IMR-90 (cell line): ENCODE measurements at regions of chr17 and their contacts with region 1.

Region 1: GRCh38 chr17:63626551-63627180 is 4.4 kb downstream of the MAP3K3 start:
- DNase-seq: peak; percentile 34
- ATAC-seq: no peak
- H3K4me3 ChIP-seq: peak overlapping the region; percentile 21; the same call in 1 of the 2 replicates
- H3K27ac ChIP-seq: no peak overlapping the region
- H3K4me1 ChIP-seq: peaks cover 6% of the 10 kb centered on the region; the same call in 1 of the 2 replicates
- H3K27me3 ChIP-seq: no peaks in the 10 kb centered on the region
- CTCF ChIP-seq: no peak
- POLR2A ChIP-seq: no peak
- RAD21 ChIP-seq: no peak

Region 2: DNA sequence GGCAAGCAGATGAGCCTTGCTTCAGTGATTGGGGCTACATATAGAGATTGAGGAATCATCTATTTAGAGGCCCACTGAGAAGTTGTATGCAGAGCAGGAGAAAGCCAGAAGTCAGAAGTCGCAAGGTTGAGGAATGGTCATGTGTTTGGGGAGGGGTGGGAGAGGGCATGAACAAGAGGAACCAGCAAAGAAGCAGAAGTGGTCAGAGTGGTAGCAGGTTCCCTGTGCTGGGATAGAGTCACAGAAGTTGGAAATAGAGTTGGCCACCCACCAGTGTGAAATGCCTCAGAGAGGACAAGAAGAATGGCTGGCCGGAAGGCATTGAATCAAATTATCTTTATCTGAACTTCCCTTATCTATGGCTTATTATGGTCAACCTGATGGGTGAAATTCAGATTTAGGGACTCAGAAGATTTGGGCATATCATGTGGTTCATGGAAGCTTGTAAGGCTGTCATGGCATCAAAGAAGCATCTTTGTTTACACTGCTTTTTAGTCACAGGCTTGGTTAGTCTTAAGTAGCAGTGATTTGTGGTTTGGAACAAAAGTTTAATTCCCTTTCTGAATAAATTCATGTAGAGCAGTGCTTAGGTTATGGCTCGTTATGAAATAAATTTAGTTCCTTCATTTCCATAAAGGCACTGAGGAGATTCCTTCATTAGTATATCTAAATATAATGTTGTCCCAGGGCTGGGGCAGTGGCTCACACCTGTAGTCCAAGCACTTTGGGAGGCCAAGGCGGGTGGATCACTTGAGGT is 15.2 kb after region 1 on chr17:
- CTCF ChIA-PET with region 1: no interaction called
- POLR2A ChIA-PET with region 1: no interaction called
- dilution Hi-C with region 1: no loop called
- in situ Hi-C with region 1: no loop called
- intact Hi-C with region 1: loop called (anchors 2 kb)
- DNase-seq: no peak
- ATAC-seq: no peak
- H3K4me3 ChIP-seq: no peak overlapping the region
- H3K27ac ChIP-seq: no peak overlapping the region
- H3K4me1 ChIP-seq: no peaks in the 10 kb centered on the region; the same call in 1 of the 2 replicates
- H3K27me3 ChIP-seq: no peaks in the 10 kb centered on the region
- CTCF ChIP-seq: no peak
- POLR2A ChIP-seq: no peak
- RAD21 ChIP-seq: no peak

Region 3: GRCh38 chr17:63675607-63676413 is 49.1 kb after region 1 on chr17:
- CTCF ChIA-PET with region 1: no interaction called
- POLR2A ChIA-PET with region 1: no interaction called
- dilution Hi-C with region 1: no loop called
- in situ Hi-C with region 1: no loop called
- intact Hi-C with region 1: loop called (anchors 5 kb)
- DNase-seq: peak; percentile 83
- ATAC-seq: peak; percentile 89
- H3K4me3 ChIP-seq: no peak overlapping the region
- H3K27ac ChIP-seq: no peak overlapping the region
- H3K4me1 ChIP-seq: peaks cover 10% of the 10 kb centered on the region
- H3K27me3 ChIP-seq: no peaks in the 10 kb centered on the region
- CTCF ChIP-seq: no peak
- POLR2A ChIP-seq: no peak
- RAD21 ChIP-seq: no peak

Region 4: GRCh38 chr17:64466019-64466685 is 839.5 kb after region 1 on chr17:
- CTCF ChIA-PET with region 1: no interaction called
- POLR2A ChIA-PET with region 1: no interaction called
- dilution Hi-C with region 1: no loop called
- in situ Hi-C with region 1: no loop called
- intact Hi-C with region 1: no loop called
- DNase-seq: no peak
- ATAC-seq: no peak
- H3K4me3 ChIP-seq: no peak overlapping the region
- H3K27ac ChIP-seq: no peak overlapping the region
- H3K4me1 ChIP-seq: no peaks in the 10 kb centered on the region
- H3K27me3 ChIP-seq: peaks cover 8% of the 10 kb centered on the region
- CTCF ChIP-seq: no peak
- POLR2A ChIP-seq: no peak
- RAD21 ChIP-seq: no peak